ENCODE measurements at regions of chr11 and their contacts with region 1.

Region 1: GRCh38 chr11:62394825-62395538 is 23.9 kb upstream of the SCGB1A1 start:
- DNase-seq: peak; percentile 83 to 93
- ATAC-seq: peak; percentile 82 to 84
- H3K4me3 ChIP-seq: peak overlapping the region; percentile 8; the same call in 1 of the 3 replicates
- H3K27ac ChIP-seq: peak overlapping the region; percentile 65 to 76
- H3K4me1 ChIP-seq: peaks cover 37% of the 10 kb centered on the region
- CTCF ChIP-seq: peak; percentile 91
- EP300 ChIP-seq: no peak
- POLR2A ChIP-seq: no peak
- RAD21 ChIP-seq: peak; percentile 93

Region 2: DNA sequence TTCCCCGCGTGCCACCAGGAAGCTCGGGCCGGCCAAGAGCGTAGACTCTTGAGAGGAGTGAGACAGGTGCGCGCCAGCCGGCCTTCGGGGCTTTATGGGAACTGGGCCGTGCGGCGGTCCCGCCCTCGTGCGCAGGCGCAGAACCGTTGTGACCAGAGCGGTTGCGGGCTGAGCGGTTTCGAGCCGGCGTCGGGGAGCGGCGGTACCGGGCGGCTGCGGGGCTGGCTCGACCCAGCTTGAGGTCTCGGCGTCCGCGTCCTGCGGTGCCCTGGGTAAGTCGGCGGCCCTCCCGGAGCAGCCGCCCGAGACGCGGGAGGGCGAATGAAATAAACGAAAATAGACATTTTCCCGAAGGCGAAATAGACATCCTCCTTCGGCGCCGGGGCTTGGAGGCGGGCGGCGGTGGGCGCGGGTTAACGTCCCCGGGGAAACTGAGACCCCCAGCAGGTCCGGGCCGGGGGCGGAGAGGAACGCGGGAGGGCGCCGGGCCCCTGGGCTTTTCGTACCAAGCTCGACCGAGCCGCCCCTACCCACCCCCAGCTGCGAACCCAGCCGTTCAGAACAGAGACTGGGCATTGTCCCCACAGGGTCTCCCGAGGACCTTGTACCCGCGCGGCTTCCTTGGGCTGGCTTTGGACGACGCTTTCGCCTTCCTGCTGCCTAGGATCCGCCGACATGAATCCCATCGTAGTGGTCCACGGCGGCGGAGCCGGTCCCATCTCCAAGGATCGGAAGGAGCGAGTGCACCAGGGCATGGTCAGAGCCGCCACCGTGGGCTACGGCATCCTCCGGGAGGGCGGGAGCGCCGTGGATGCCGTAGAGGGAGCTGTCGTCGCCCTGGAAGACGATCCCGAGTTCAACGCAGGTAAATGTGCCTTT is 57.4 kb before region 1 on chr11 and contains the start of gene ASRGL1:
- CTCF ChIA-PET with region 1: interaction called, 31 read pairs
- POLR2A ChIA-PET with region 1: no interaction called
- DNase-seq: peak; percentile 82 to 87
- ATAC-seq: peak; percentile 89 to 95
- H3K4me3 ChIP-seq: peak within 1 kb of the TSS; percentile 79
- H3K27ac ChIP-seq: peak within 1 kb of the TSS; percentile 76 to 88
- H3K4me1 ChIP-seq: no peaks in the 10 kb centered on the region
- CTCF ChIP-seq: no peak
- EP300 ChIP-seq: no peak
- POLR2A ChIP-seq: peak; percentile 50
- RAD21 ChIP-seq: no peak
- polyA plus RNA-seq, gene ASRGL1: 13.6 and 19.5 TPM in 2 replicates

Region 3: DNA sequence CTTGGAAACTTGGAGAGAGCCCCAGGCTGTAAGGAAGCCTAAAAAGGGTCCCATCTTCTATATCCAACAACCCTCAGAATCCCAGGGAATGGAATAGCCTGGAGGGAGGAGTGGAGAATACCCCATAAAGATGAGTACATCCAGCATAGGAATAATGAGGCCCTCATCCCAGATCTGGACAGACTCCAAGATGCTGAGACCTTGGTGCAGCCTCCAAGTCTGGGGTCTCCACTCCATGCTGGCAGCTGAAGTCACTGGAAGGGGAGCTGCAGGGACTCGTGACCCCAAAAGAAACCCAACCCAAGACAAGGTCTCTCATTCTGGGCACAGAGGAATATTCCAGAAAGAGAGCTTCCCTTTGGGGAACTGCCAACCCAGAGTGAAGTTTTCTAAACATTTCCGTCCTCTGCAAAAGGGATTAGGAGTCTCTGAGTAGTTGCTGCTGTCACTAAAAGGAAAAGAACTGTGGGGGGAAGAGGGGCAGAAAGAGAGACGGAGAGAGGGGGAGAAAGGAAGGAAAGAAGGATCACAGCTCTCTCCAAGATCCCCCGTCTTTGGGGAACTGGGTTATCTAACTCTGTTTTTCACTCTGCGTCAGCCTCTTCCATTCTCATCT is 24.4 kb after region 1 on chr11:
- CTCF ChIA-PET with region 1: interaction called, 86 read pairs
- POLR2A ChIA-PET with region 1: no interaction called
- DNase-seq: no peak
- ATAC-seq: no peak
- H3K4me3 ChIP-seq: no peak overlapping the region
- H3K27ac ChIP-seq: peak overlapping the region in 1 of 2 experiments; percentile 17; a peak in 1 of 6 replicates
- H3K4me1 ChIP-seq: peaks cover 4% of the 10 kb centered on the region; the same call in 1 of the 3 replicates
- CTCF ChIP-seq: no peak
- EP300 ChIP-seq: no peak
- POLR2A ChIP-seq: no peak
- RAD21 ChIP-seq: no peak

Region 4: GRCh38 chr11:62449451-62449851 is 54.5 kb after region 1 on chr11:
- CTCF ChIA-PET with region 1: interaction called, 11 read pairs
- POLR2A ChIA-PET with region 1: no interaction called
- DNase-seq: peak in 1 of 2 experiments; percentile 45
- ATAC-seq: peak; percentile 76 to 79
- H3K4me3 ChIP-seq: no peak overlapping the region
- H3K27ac ChIP-seq: peak overlapping the region in 1 of 2 experiments; percentile 69; a peak in 3 of 6 replicates
- H3K4me1 ChIP-seq: peaks cover 22% of the 10 kb centered on the region; the same call in 2 of the 3 replicates
- CTCF ChIP-seq: no peak
- EP300 ChIP-seq: no peak
- POLR2A ChIP-seq: no peak
- RAD21 ChIP-seq: no peak

Region 5: GRCh38 chr11:62508268-62509058 is 113.5 kb after region 1 on chr11:
- CTCF ChIA-PET with region 1: interaction called, 18 read pairs
- POLR2A ChIA-PET with region 1: no interaction called
- DNase-seq: peak; percentile 88 to 89
- ATAC-seq: peak; percentile 94 to 98
- H3K4me3 ChIP-seq: 0 out of 3 replicates have a peak overlapping the region, but pooled peaks have one; percentile 16
- H3K27ac ChIP-seq: peak overlapping the region; percentile 82 to 86
- H3K4me1 ChIP-seq: peaks cover 63% of the 10 kb centered on the region
- CTCF ChIP-seq: peak; percentile 50
- EP300 ChIP-seq: no peak
- POLR2A ChIP-seq: no peak
- RAD21 ChIP-seq: peak; percentile 22 to 47; a peak in 2 of 5 replicates

Region 6: GRCh38 chr11:62556108-62556871 is 161.3 kb after region 1 on chr11:
- CTCF ChIA-PET with region 1: interaction called, 129 read pairs
- POLR2A ChIA-PET with region 1: interaction called, 7 read pairs
- DNase-seq: peak; percentile 95 to 99
- ATAC-seq: peak; percentile 55 to 76
- H3K4me3 ChIP-seq: peak overlapping the region; percentile 4; the same call in 1 of the 3 replicates
- H3K27ac ChIP-seq: peak overlapping the region; percentile 90 to 94
- H3K4me1 ChIP-seq: peaks cover 96% of the 10 kb centered on the region
- CTCF ChIP-seq: no peak
- EP300 ChIP-seq: no peak
- POLR2A ChIP-seq: no peak
- RAD21 ChIP-seq: peak in 1 of 2 experiments; percentile 10; a peak in 1 of 5 replicates

Region 7: GRCh38 chr11:62612366-62613290 is 217.6 kb after region 1 on chr11 and contains the starts of genes EML3 and ROM1:
- CTCF ChIA-PET with region 1: interaction called, 14 read pairs
- POLR2A ChIA-PET with region 1: no interaction called
- DNase-seq: peak; percentile 88
- ATAC-seq: peak; percentile 65 to 82
- H3K4me3 ChIP-seq: peak within 1 kb of the TSS; percentile 61
- H3K27ac ChIP-seq: peak within 1 kb of the TSS; percentile 80 to 98
- H3K4me1 ChIP-seq: peaks cover 29% of the 10 kb centered on the region
- CTCF ChIP-seq: peak; percentile 100
- EP300 ChIP-seq: no peak
- POLR2A ChIP-seq: no peak
- RAD21 ChIP-seq: peak in 1 of 2 experiments; percentile 59; a peak in 3 of 5 replicates
- polyA plus RNA-seq, gene EML3: 15.2 and 19.7 TPM in 2 replicates
- polyA plus RNA-seq, gene ROM1: 0.92 and 1.6 TPM in 2 replicates